K562 (cell line): ENCODE measurements at regions of chrX and their contacts with region 1.

Region 1: GRCh38 chrX:66110112-66110511 is 53.9 kb upstream of the HEPH start:
- DNase-seq: peak; percentile 41 to 60 (median 53)
- ATAC-seq: peak; percentile 87
- H3K4me3 ChIP-seq: no peak overlapping the region
- H3K27ac ChIP-seq: no peak overlapping the region
- H3K4me1 ChIP-seq: peaks cover 0 to 3% of the 10 kb centered on the region in 2 experiments; a peak in 1 of 5 replicates
- H3K27me3 ChIP-seq: no peaks in the 10 kb centered on the region
- CTCF ChIP-seq: peak; percentile 65 to 96 (median 94)
- EP300 ChIP-seq: no peak
- POLR2A ChIP-seq: no peak
- RAD21 ChIP-seq: peak; percentile 77 to 80

Region 2: DNA sequence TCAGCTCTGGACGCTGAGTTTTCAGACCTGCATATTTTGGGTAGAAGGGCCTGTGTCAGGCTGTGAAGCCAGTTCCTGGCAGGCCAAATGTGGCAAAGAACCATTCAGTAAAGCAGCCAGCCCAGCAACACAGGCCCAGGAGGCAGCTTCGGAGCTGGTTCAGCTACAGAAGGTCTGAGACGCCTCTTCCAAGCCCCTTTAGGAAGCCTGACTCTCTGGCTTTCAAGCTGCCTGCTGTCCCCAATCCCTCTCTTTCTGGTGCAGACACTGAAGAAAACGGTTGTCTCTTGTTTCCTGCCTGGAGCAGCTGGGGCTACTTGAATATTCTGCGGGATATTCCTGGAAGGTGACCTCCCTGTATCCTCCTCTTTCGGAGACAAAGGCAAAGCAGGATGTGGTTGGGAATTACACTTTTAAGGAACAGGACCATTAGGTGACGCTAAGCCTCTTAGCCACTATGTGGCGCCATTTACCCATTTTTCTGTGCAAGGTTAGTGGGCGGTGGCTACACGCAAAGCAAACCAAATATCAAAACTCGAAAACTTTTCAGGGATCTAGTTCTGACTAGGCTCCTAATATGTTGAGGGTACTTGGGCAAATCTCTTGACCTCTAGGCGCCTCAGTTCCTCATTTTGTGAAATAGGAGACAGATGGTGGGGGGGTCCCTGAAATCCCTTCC is 528.3 kb before region 1 on chrX:
- CTCF ChIA-PET with region 1: interaction called, 3 read pairs
- POLR2A ChIA-PET with region 1: no interaction called
- in situ Hi-C with region 1: no loop called
- intact Hi-C with region 1: loop called (anchors 1 kb)
- DNase-seq: peak; percentile 53 to 80 (median 60)
- ATAC-seq: peak; percentile 93
- H3K4me3 ChIP-seq: no peak overlapping the region
- H3K27ac ChIP-seq: peak overlapping the region; percentile 62; the same call in 2 of the 3 replicates
- H3K4me1 ChIP-seq: peaks cover 4 to 12% of the 10 kb centered on the region in 2 experiments; a peak in 4 of 5 replicates
- H3K27me3 ChIP-seq: no peaks in the 10 kb centered on the region
- CTCF ChIP-seq: peak; percentile 74 to 90 (median 77)
- EP300 ChIP-seq: no peak
- POLR2A ChIP-seq: no peak
- RAD21 ChIP-seq: peak; percentile 86 to 89

Region 3: DNA sequence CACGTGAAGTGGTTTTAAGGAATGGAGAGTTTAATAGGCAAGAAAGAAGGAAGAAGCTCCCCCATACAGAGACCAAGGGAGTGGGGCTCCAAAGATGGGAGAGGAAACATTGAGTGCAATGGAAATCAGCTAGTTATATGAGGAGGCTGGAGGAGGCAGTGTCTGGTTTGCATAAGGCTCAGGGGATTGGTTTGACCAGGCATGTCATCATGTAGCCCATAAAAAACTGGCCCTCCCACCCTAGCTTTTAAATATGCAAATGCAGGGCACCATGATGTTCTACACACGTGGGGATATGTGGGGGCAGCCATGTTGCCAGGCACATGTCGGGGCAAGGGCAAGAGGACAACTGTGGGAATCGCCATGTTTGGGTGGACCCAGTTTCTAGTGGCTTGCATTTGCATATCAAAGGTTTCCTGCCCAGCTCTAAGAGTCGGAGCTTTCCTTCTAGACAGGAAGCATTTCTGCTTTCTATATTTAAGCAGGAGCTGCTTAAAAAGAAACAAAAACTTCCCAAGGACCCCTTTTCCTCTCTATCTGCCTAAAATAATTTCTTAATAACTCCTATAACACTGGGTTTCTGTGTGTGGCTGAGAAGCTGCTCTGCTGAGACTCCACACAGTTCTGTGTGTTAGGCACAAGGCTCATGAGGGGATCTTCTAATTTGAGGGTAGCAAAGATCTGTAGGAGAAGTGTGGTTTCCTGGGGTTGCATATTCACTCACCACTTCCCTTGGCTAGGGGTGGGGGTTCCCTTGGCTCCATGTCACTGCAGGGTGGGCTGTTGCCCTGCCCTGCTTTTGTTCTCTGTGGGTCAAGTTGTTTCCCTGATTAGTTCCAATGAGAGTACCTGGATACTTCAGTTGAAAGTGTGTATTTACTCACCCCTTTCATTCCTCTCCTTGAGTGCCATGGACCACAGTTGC is 183.8 kb before region 1 on chrX:
- CTCF ChIA-PET with region 1: no interaction called
- POLR2A ChIA-PET with region 1: no interaction called
- in situ Hi-C with region 1: no loop called
- intact Hi-C with region 1: loop called (anchors 2 kb)
- DNase-seq: peak; percentile 7 to 87 (median 38)
- ATAC-seq: peak; percentile 94
- H3K4me3 ChIP-seq: peak overlapping the region; percentile 67
- H3K27ac ChIP-seq: peak overlapping the region; percentile 100
- H3K4me1 ChIP-seq: peaks cover 9 to 13% of the 10 kb centered on the region in 2 experiments; a peak in 3 of 5 replicates
- H3K27me3 ChIP-seq: no peaks in the 10 kb centered on the region
- CTCF ChIP-seq: no peak
- EP300 ChIP-seq: peak; percentile 11; the same call in 1 of the 2 replicates
- POLR2A ChIP-seq: peak; percentile 94
- RAD21 ChIP-seq: no peak

Region 4: GRCh38 chrX:66030505-66031317 is 79.4 kb before region 1 on chrX:
- CTCF ChIA-PET with region 1: no interaction called
- POLR2A ChIA-PET with region 1: interaction called, 4 read pairs
- in situ Hi-C with region 1: no loop called
- intact Hi-C with region 1: loop called (anchors 2 kb)
- DNase-seq: peak; percentile 38 to 82 (median 51)
- ATAC-seq: peak; percentile 91
- H3K4me3 ChIP-seq: peak overlapping the region; percentile 15; the same call in 1 of the 2 replicates
- H3K27ac ChIP-seq: peak overlapping the region; percentile 90
- H3K4me1 ChIP-seq: peaks cover 5 to 40% of the 10 kb centered on the region in 2 experiments
- H3K27me3 ChIP-seq: no peaks in the 10 kb centered on the region
- CTCF ChIP-seq: peak; percentile 71 to 79 (median 75)
- EP300 ChIP-seq: peak; percentile 82; the same call in 1 of the 2 replicates
- POLR2A ChIP-seq: no peak
- RAD21 ChIP-seq: peak; percentile 44 to 64

Region 5: DNA sequence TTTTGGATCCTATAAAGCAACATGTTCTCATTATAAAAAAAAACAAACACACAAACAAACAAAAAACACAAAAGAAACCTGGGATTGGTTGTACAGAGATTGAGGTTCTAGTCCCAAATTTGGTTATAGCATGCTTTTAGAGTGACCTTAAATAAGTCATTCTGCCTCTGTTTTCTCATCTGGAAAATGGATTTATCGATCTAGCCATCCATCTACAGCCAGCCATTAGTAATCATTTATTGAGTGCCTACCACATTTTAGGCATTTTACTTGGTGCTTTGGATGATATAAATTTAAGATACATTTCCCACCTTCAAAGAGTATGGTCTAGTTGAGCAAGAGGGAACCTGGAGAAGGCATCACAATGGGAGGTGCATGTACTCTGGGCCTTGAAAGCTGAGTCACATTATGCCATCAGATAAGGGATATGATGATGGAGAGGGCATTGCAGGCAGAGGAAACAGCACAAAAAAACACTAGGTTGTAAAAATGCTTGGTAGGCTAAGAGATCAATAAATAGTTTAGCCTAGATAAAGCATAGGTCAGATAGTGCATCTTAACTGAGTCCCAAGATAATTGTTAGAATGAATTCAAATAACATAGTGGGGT is 145.4 kb after region 1 on chrX:
- CTCF ChIA-PET with region 1: no interaction called
- POLR2A ChIA-PET with region 1: no interaction called
- in situ Hi-C with region 1: no loop called
- intact Hi-C with region 1: no loop called
- DNase-seq: peak in 2 of 4 experiments; percentile 13 to 21
- ATAC-seq: peak; percentile 83
- H3K4me3 ChIP-seq: no peak overlapping the region
- H3K27ac ChIP-seq: no peak overlapping the region
- H3K4me1 ChIP-seq: no peaks in the 10 kb centered on the region; a peak in 1 of 5 replicates
- H3K27me3 ChIP-seq: no peaks in the 10 kb centered on the region
- CTCF ChIP-seq: no peak
- EP300 ChIP-seq: no peak
- POLR2A ChIP-seq: no peak
- RAD21 ChIP-seq: no peak

Region 6: GRCh38 chrX:66728818-66729271 is 618.7 kb after region 1 on chrX:
- CTCF ChIA-PET with region 1: no interaction called
- POLR2A ChIA-PET with region 1: no interaction called
- in situ Hi-C with region 1: no loop called
- intact Hi-C with region 1: loop called (anchors 2 kb)
- DNase-seq: peak; percentile 55 to 72 (median 58)
- ATAC-seq: peak; percentile 100
- H3K4me3 ChIP-seq: peak overlapping the region; percentile 55
- H3K27ac ChIP-seq: peak overlapping the region; percentile 78
- H3K4me1 ChIP-seq: no peaks in the 10 kb centered on the region
- H3K27me3 ChIP-seq: no peaks in the 10 kb centered on the region
- CTCF ChIP-seq: peak; percentile 57 to 88 (median 64)
- EP300 ChIP-seq: no peak
- POLR2A ChIP-seq: no peak
- RAD21 ChIP-seq: peak; percentile 49 to 63